ENCODE measurements at regions of chr18 and their contacts with region 1.

Region 1: DNA sequence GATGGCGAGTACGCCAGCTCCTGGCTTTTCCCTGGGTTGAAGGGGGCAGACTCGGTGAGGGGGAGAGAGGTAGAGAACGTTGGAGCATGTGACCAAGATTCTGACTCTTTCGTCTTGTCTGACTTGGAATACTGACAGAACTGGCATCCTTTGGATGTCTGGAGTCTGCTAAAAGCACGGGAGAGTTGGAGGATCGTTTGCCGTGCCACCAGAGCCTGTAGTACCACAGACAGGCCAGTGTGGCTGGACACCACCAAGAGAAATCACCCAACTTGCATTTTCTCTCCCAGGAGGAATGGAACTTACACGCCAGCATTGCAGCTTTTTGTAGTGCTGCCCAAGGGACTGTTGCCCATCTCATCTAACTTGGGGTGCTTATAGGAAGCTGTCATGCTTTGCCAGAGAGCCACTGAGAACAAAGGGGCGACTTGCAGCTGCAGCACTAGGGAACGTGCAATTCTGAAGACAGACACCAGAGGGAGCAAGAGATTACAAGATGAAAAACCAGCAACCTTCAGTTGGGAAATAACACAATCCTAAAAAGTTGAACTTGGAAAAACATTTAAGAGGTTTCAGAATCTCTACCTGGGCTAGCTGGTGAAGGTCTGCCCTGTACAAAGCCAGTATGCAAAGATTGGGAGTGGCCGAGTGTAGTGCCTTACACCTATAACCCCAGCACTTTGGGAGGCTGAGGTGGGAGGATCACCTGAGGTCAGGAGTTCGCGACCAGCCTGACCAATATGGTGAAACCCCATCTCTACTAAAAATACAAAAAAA is 24.1 kb downstream of the PSMG2 start:
- DNase-seq: peak; percentile 72
- CTCF ChIP-seq: peak; percentile 83

Region 2: DNA sequence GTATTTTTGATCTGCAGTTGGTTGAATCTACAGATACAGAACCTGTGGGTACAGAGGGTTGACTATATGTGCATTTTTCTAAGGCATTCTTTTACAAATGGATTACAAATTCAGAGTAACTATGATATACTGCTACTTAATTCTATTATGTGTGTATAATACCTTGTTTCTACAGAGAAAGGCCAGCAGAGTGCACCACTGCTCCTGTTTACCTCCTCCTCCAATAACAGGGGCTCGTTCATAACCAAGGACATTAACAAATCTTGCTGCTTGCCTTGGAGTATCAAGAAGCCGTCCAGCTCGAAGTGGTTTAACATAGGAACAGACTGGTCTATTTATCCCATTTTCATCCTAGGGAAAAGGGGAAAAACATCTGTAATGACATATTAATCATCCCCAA is 40.9 kb before region 1 on chr18:
- CTCF ChIA-PET with region 1: no interaction called
- POLR2A ChIA-PET with region 1: no interaction called
- DNase-seq: no peak
- CTCF ChIP-seq: no peak

Region 3: GRCh38 chr18:12744103-12744502 is 17.1 kb after region 1 on chr18:
- CTCF ChIA-PET with region 1: interaction called, 11 read pairs
- POLR2A ChIA-PET with region 1: no interaction called
- DNase-seq: peak; percentile 68
- CTCF ChIP-seq: peak; percentile 58

Region 4: DNA sequence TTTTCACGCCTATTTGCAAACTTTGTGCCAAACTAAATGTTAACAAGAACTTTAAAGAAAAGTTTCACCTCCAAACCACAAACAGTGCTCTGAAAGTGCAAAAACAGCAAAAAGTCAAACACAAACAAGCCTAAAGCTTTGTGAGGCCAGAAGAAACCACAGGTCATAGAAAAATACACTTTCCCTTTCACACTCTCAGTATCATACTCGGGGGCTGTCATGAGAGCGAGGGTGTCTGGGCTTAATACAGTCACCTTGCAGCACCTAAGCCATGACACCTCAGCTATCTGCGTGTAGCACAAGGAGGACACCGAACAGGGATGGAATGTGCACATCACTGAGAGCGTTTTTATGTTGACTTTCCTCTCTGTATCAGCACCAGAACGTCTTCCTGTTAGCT is 194.2 kb after region 1 on chr18:
- CTCF ChIA-PET with region 1: interaction called, 12 read pairs
- POLR2A ChIA-PET with region 1: no interaction called
- DNase-seq: peak; percentile 54
- CTCF ChIP-seq: no peak

Measured in GM10248 (cell line).